ENCODE measurements at regions of chr5 and their contacts with region 1.

Region 1: GRCh38 chr5:179763215-179763945 is 30.4 kb upstream of the LTC4S start:
- DNase-seq: peak; percentile 77
- ATAC-seq: peak; percentile 63
- H3K4me3 ChIP-seq: no peak overlapping the region
- H3K27ac ChIP-seq: no peak overlapping the region
- H3K4me1 ChIP-seq: peaks cover 42% of the 10 kb centered on the region
- H3K27me3 ChIP-seq: no peaks in the 10 kb centered on the region
- CTCF ChIP-seq: peak; percentile 84

Region 2: GRCh38 chr5:179795863-179796833 is 32.8 kb after region 1 on chr5:
- CTCF ChIA-PET with region 1: interaction called, 4 read pairs
- POLR2A ChIA-PET with region 1: no interaction called
- intact Hi-C with region 1: loop called (anchors 1 kb)
- DNase-seq: peak; percentile 74
- ATAC-seq: peak; percentile 81
- H3K4me3 ChIP-seq: peak overlapping the region; percentile 76
- H3K27ac ChIP-seq: 0 out of 2 replicates have a peak overlapping the region, but pooled peaks have one; percentile 20
- H3K4me1 ChIP-seq: peaks cover 8% of the 10 kb centered on the region; the same call in 1 of the 2 replicates
- H3K27me3 ChIP-seq: no peaks in the 10 kb centered on the region
- CTCF ChIP-seq: peak; percentile 58

Region 3: GRCh38 chr5:179821581-179822432 is 58.4 kb after region 1 on chr5:
- CTCF ChIA-PET with region 1: no interaction called
- POLR2A ChIA-PET with region 1: no interaction called
- intact Hi-C with region 1: loop called (anchors 2 kb)
- DNase-seq: peak; percentile 80
- ATAC-seq: peak; percentile 50
- H3K4me3 ChIP-seq: peak overlapping the region; percentile 93
- H3K27ac ChIP-seq: peak overlapping the region; percentile 96
- H3K4me1 ChIP-seq: peaks cover 41% of the 10 kb centered on the region
- H3K27me3 ChIP-seq: no peaks in the 10 kb centered on the region
- CTCF ChIP-seq: no peak

Measured in PC-3 (cell line).